OCI-LY7 (cell line): ENCODE measurements at regions of chrX and their contacts with region 1.

Region 1: DNA sequence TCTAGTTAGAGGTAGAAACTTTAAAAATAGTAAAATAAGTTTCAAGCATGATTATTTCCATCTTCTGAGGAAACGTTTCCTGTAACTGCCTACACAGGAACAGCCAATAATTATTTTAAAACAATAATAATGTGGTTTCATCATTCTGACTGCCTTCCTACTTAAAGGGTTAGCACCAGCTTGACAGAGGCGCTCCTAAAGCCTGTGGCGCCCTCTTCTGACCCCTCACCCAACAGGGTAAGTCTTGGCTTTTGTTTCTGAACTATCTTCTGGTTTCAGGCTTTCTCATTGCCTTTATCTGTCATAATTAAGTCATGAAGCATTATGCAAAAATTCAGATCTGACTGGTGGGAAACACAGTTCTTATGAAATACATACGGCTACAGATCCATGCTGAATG is 96.7 kb downstream of the ITM2A start:
- DNase-seq: peak; percentile 74
- H3K4me3 ChIP-seq: no peak overlapping the region
- H3K27ac ChIP-seq: no peak overlapping the region
- H3K4me1 ChIP-seq: peaks cover 15% of the 10 kb centered on the region
- CTCF ChIP-seq: peak; percentile 88

Region 2: GRCh38 chrX:78555401-78555980 is 714.9 kb before region 1 on chrX:
- CTCF ChIA-PET with region 1: no interaction called
- POLR2A ChIA-PET with region 1: no interaction called
- intact Hi-C with region 1: loop called (anchors 5 kb)
- DNase-seq: peak; percentile 2
- H3K4me3 ChIP-seq: no peak overlapping the region
- H3K27ac ChIP-seq: no peak overlapping the region
- H3K4me1 ChIP-seq: no peaks in the 10 kb centered on the region
- CTCF ChIP-seq: peak; percentile 62

Region 3: DNA sequence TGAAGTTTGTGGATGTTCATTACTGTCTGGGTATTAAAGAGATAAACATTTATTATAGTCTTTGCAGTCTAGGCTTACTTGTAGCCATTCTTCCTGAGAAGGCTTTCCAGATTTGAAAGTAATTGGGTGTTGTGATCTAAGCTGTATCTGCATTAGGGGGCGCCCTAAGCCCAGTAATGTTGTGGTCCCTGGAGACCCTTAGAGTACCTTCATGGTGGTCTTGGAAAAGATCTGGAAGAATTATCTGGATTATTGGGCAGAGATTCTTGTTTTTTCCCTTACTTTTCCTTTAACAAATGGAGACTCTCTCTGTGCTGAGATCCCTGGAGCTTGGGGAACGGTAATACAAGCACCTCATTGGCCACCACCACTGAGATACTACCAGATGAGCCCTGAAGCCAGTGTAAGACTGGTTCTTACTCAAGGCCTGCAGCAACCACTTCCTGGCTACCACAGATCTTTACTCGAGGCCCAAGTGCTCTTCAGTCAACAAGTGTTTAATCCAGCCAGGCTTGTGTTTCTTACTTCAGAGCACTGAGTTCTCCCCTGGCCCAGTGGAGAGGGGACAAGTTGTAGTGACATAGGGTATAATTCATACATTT is 674.4 kb before region 1 on chrX:
- CTCF ChIA-PET with region 1: no interaction called
- POLR2A ChIA-PET with region 1: interaction called, 3 read pairs
- intact Hi-C with region 1: loop called (anchors 2 kb)
- DNase-seq: peak; percentile 13
- H3K4me3 ChIP-seq: no peak overlapping the region
- H3K27ac ChIP-seq: no peak overlapping the region
- H3K4me1 ChIP-seq: no peaks in the 10 kb centered on the region
- CTCF ChIP-seq: peak; percentile 67

Region 4: GRCh38 chrX:78754917-78755316 is 515.5 kb before region 1 on chrX:
- CTCF ChIA-PET with region 1: no interaction called
- POLR2A ChIA-PET with region 1: no interaction called
- intact Hi-C with region 1: loop called (anchors 10 kb)
- DNase-seq: peak; percentile 74
- H3K4me3 ChIP-seq: peak overlapping the region; percentile 34
- H3K27ac ChIP-seq: peak overlapping the region; percentile 50
- H3K4me1 ChIP-seq: peaks cover 36% of the 10 kb centered on the region
- CTCF ChIP-seq: peak; percentile 63

Region 5: GRCh38 chrX:78945186-78945912 is 325.1 kb before region 1 on chrX and contains the start of gene P2RY10:
- CTCF ChIA-PET with region 1: no interaction called
- POLR2A ChIA-PET with region 1: interaction called, 3 read pairs
- intact Hi-C with region 1: loop called (anchors 10 kb)
- DNase-seq: peak; percentile 70
- H3K4me3 ChIP-seq: peak within 1 kb of the TSS; percentile 72
- H3K27ac ChIP-seq: peak within 1 kb of the TSS; percentile 70
- H3K4me1 ChIP-seq: peaks cover 48% of the 10 kb centered on the region
- CTCF ChIP-seq: no peak
- total RNA-seq, gene P2RY10: 8.1 and 10.3 TPM in 2 replicates

Region 6: DNA sequence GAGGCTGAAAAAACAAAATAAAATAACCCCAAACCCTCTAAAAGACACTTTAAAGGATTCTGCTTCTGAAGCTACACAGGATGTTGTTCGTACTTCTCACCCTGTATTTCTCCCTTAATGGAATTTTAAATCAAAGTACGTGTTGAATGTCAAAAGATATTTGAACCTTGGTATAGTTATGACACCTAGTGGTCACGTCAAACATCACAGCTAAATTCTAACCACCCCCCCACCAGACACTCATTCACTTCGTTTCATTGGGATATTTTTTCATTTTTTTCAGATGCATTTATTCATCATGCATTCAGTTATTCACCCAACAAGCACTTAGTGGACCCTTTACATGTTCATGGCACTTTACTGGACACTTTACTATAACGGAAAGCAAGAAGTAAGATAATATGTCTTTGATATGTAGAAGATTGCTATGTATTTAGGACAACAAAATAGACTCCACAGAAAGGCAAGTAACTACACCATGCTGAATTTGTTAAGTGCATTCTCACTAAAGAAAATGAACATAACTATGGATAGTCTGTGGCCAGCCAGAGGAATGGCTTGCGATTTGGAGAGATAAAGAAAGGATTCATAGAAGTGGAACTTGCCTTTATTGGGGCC is 188.4 kb before region 1 on chrX:
- CTCF ChIA-PET with region 1: no interaction called
- POLR2A ChIA-PET with region 1: interaction called, 3 read pairs
- intact Hi-C with region 1: loop called (anchors 1 kb)
- DNase-seq: peak; percentile 58
- H3K4me3 ChIP-seq: no peak overlapping the region
- H3K27ac ChIP-seq: no peak overlapping the region
- H3K4me1 ChIP-seq: peaks cover 5% of the 10 kb centered on the region
- CTCF ChIP-seq: peak; percentile 79

Region 7: DNA sequence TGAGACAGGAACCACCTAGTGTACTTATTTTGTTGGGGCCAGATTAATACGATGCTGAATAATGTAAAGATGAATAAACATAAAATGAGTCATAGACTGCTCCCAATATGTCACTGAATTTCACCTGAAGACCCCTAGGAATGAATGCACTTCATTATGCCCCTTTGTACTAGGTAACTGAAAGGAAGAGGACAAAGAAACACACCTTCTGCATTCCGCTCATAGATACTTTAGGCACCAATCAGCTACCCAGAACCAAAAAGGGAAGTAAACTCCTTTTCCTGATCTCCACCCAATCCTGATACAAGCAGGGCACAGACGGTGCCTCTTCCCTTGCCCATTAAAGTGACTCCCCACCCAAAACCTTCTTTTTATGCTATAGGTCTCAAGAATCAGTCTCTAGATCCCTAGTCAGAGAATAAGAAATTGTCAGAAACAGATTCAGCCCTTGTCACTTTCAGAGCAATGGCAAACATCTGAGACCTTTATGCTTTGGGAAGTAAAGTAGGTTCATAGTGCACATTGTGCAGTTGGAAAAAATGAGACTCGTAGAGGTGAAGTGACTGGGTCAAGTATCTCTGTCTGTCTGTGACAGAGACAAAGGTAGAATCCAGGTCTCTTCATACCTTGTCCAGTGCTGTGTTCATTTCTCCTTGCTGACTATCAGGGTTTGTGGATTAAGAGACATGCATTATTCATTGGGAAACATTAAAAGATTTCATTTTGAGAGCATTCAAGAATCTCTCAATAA is 123.6 kb before region 1 on chrX:
- CTCF ChIA-PET with region 1: no interaction called
- POLR2A ChIA-PET with region 1: interaction called, 11 read pairs
- intact Hi-C with region 1: no loop called
- DNase-seq: peak; percentile 32
- H3K4me3 ChIP-seq: peak overlapping the region; percentile 73
- H3K27ac ChIP-seq: peak overlapping the region; percentile 77
- H3K4me1 ChIP-seq: peaks cover 48% of the 10 kb centered on the region
- CTCF ChIP-seq: no peak